Naive thymus-derived CD4-positive, alpha-beta T cell (primary cell): ENCODE measurements at regions of chr13 and their contacts with region 1.

Region 1: GRCh38 chr13:30408319-30409101 is 13.8 kb upstream of the UBE2L5 start:
- DNase-seq: peak; percentile 78 to 89 (median 85)
- ATAC-seq: peak; percentile 97
- H3K4me3 ChIP-seq: peak overlapping the region; percentile 44
- H3K4me3 Mint-ChIP-seq: peak overlapping the region; percentile 64 to 78 (median 72)
- H3K27ac ChIP-seq: peak overlapping the region; percentile 52
- H3K27ac Mint-ChIP-seq: peak overlapping the region; percentile 51 to 87 (median 83)
- H3K4me1 ChIP-seq: peaks cover 9 to 14% of the 10 kb centered on the region in 2 donors
- H3K4me1 Mint-ChIP-seq: peaks cover 6 to 46% (median 37%) of the 10 kb centered on the region in 7 donors
- H3K27me3 ChIP-seq: no peaks in the 10 kb centered on the region
- H3K27me3 Mint-ChIP-seq: peaks cover 0 to 12% (median 0%) of the 10 kb centered on the region in 5 donors

Region 2: GRCh38 chr13:30422054-30422839 is 13.7 kb after region 1 on chr13 and contains the start of gene UBE2L5:
- CTCF ChIA-PET with region 1: interaction called, 4 read pairs
- POLR2A ChIA-PET with region 1: interaction called, 3 read pairs
- intact Hi-C with region 1: loop called (anchors 1 to 2 kb)
- DNase-seq: peak; percentile 41 to 89 (median 56)
- ATAC-seq: peak; percentile 92
- H3K4me3 ChIP-seq: peak within 1 kb of the TSS; percentile 67
- H3K4me3 Mint-ChIP-seq: peak within 1 kb of the TSS; percentile 80 to 94 (median 89)
- H3K27ac ChIP-seq: peak within 1 kb of the TSS; percentile 38
- H3K27ac Mint-ChIP-seq: peak within 1 kb of the TSS; percentile 64 to 93 (median 86)
- H3K4me1 ChIP-seq: no peaks in the 10 kb centered on the region
- H3K4me1 Mint-ChIP-seq: peaks cover 7 to 29% (median 15%) of the 10 kb centered on the region in 7 donors
- H3K27me3 ChIP-seq: no peaks in the 10 kb centered on the region
- H3K27me3 Mint-ChIP-seq: no peaks in the 10 kb centered on the region
- total RNA-seq, gene UBE2L5: not detected

Region 3: GRCh38 chr13:30429721-30430694 is 21.5 kb after region 1 on chr13:
- CTCF ChIA-PET with region 1: interaction called, 11 read pairs
- POLR2A ChIA-PET with region 1: interaction called, 3 read pairs
- intact Hi-C with region 1: no loop called
- DNase-seq: no peak
- ATAC-seq: peak; percentile 81
- H3K4me3 ChIP-seq: no peak overlapping the region
- H3K4me3 Mint-ChIP-seq: peak overlapping the region in 2 of 10 donors; percentile 53 to 64
- H3K27ac ChIP-seq: no peak overlapping the region
- H3K27ac Mint-ChIP-seq: peak overlapping the region in 3 of 9 donors; percentile 20 to 76 (median 74)
- H3K4me1 ChIP-seq: no peaks in the 10 kb centered on the region
- H3K4me1 Mint-ChIP-seq: peaks cover 4 to 32% (median 8%) of the 10 kb centered on the region in 7 donors
- H3K27me3 ChIP-seq: no peaks in the 10 kb centered on the region
- H3K27me3 Mint-ChIP-seq: no peaks in the 10 kb centered on the region